Tibial artery (tissue), 4 donors: ENCODE measurements at regions of chr14 and their contacts with region 1.

Region 1: DNA sequence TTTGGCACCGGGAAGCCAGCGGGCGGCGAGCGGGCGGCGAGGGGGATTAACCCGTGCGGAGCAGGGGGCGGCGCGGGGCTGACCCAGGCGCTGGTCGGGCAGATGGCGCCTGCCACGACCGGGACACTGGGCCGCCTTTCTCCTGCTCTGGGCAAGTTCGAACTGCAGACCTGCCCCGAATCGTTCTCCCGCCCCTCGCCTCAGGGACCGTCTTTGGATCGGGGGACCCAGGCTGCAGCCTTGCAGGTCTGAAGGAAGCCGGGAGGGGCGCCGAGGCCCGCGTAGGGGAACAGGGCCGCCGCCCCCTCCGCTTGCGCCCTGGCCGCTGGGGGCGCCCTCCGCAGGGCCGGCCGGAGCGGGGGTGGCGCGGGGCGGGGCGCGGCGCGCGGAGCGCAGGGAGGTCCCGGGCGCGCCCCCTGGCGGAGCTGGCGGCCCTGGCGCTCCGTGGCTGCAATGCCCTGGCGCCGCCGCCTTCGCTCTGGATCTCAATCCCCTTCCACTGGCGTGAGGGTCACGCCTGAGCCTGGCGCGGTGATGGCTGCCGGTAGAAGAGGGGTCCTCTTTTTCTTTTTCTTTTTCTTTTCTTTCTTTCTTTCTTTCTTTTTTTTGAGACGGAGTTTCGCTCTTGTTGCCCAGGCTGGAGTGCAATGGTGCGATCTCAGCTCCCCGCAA is 449 bp upstream of the LTBP2 start:
- DNase-seq: peak; percentile 80 to 89
- H3K4me3 ChIP-seq: peak overlapping the region; percentile 60 to 77
- H3K27ac ChIP-seq: peak overlapping the region; percentile 67 to 73
- H3K4me1 ChIP-seq: peaks cover 0 to 67% (median 44%) of the 10 kb centered on the region in 4 donors
- H3K27me3 ChIP-seq: no peaks in the 10 kb centered on the region
- CTCF ChIP-seq: peak; percentile 60 to 99

Region 2: DNA sequence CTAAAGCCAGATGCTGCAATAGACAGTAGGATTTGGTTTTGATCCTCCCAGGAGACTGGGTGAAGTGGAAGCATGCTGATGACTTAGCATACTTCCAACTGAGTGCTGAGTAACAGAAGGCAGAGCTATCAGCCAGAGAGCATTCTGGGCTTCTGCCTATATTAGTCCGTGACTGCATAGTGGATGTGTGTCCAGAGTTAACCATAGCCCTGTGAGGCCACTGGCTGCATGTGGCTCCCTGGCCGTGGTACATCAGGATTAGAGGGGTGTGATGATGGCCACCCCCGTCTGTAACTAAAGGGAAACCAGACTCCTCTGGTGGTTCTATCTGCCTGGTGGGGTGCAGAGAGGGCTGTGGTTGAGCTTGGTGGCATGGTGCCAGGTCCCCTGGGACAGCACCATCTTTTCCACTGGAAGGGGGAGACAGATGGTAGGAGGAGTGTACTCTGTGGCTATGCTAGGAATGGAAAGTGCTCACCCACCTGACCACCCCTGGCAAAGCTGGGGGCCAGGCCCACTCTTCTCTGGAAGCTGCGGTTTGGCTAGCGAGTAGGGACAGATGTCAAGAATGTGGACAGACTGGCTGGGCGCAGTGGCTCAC is 337.1 kb before region 1 on chr14:
- intact Hi-C with region 1: no loop called
- DNase-seq: no peak
- H3K4me3 ChIP-seq: no peak overlapping the region
- H3K27ac ChIP-seq: no peak overlapping the region
- H3K4me1 ChIP-seq: no peaks in the 10 kb centered on the region
- H3K27me3 ChIP-seq: no peaks in the 10 kb centered on the region
- CTCF ChIP-seq: no peak

Region 3: GRCh38 chr14:74362361-74362915 is 250.0 kb before region 1 on chr14:
- intact Hi-C with region 1: loop called (anchors 5 kb)
- DNase-seq: peak; percentile 88
- H3K4me3 ChIP-seq: no peak overlapping the region
- H3K27ac ChIP-seq: no peak overlapping the region
- H3K4me1 ChIP-seq: no peaks in the 10 kb centered on the region
- H3K27me3 ChIP-seq: peaks cover 0 to 26% of the 10 kb centered on the region in 2 donors
- CTCF ChIP-seq: peak; percentile 95 to 96

Region 4: DNA sequence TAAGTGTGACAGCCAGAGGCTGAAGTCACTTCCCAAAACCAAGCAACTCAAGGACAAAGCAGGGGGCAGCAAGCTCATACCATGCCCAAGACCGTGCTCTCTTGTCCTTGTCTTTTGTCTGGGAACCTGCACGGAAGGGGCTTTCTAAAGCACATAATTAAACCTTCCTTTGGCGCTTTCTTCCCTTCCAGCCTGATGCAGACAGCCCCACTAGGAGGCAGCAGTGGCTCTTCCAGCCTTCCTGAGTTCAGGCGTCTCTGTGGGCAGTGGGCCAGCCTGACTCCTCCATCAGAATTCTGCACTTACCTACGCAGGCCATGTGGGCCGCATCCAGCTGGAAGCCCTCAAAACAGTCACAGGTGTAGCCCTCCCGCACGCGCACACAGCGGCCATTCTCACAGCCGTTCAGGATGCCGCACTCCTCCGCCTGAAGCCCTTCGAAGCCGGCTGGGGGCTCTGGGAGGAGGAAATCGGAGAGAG is 111.3 kb before region 1 on chr14:
- intact Hi-C with region 1: loop called (anchors 5 kb)
- DNase-seq: peak; percentile 72 to 83
- H3K4me3 ChIP-seq: no peak overlapping the region
- H3K27ac ChIP-seq: peak overlapping the region; percentile 2 to 16
- H3K4me1 ChIP-seq: no peaks in the 10 kb centered on the region
- H3K27me3 ChIP-seq: no peaks in the 10 kb centered on the region
- CTCF ChIP-seq: peak; percentile 65 to 68

Region 5: GRCh38 chr14:74712499-74713394 is 100.3 kb after region 1 on chr14 and contains the starts of genes AREL1 and FCF1:
- intact Hi-C with region 1: loop called (anchors 2 kb)
- DNase-seq: peak; percentile 84 to 89
- H3K4me3 ChIP-seq: peak within 1 kb of the TSS; percentile 80 to 88
- H3K27ac ChIP-seq: peak within 1 kb of the TSS; percentile 81 to 88
- H3K4me1 ChIP-seq: peaks cover 0 to 36% (median 24%) of the 10 kb centered on the region in 4 donors
- H3K27me3 ChIP-seq: no peaks in the 10 kb centered on the region
- CTCF ChIP-seq: no peak

Region 6: DNA sequence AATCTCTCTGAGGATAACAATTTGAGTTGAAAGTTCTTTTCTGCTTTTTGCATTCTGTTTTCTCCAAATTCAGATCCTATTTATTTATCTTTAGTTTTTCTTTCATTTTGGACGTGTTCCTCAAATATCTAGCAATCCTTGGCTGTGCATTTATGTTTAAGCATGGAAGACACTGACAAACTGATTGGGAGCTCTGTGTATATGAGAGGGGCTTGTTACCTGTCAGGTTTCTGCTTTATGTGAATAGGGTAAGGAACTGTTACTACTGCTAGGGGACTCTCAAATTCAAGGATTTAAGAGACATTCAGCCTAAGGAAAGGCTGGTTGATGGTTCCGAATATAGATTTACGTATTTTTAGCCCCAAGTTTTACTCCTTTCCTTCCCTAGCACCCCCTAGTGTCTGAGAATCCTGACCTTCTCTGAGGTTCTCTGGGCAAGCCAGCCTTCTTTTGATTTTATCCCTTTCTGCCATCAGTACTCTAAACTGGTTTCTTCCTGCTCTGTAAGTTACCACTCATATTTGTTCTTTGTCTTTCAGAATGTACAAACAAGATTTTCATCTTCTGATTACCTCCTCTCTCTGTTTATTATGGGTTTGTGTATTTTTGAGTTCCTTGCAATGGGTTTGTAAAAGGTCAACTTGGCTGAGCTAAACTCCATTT is 181.2 kb after region 1 on chr14:
- intact Hi-C with region 1: loop called (anchors 5 kb)
- DNase-seq: no peak
- H3K4me3 ChIP-seq: peak overlapping the region in 1 of 2 donors; percentile 4
- H3K27ac ChIP-seq: peak overlapping the region in 1 of 2 donors; percentile 28
- H3K4me1 ChIP-seq: peaks cover 0 to 22% (median 10%) of the 10 kb centered on the region in 4 donors
- H3K27me3 ChIP-seq: no peaks in the 10 kb centered on the region
- CTCF ChIP-seq: peak; percentile 39

Region 7: DNA sequence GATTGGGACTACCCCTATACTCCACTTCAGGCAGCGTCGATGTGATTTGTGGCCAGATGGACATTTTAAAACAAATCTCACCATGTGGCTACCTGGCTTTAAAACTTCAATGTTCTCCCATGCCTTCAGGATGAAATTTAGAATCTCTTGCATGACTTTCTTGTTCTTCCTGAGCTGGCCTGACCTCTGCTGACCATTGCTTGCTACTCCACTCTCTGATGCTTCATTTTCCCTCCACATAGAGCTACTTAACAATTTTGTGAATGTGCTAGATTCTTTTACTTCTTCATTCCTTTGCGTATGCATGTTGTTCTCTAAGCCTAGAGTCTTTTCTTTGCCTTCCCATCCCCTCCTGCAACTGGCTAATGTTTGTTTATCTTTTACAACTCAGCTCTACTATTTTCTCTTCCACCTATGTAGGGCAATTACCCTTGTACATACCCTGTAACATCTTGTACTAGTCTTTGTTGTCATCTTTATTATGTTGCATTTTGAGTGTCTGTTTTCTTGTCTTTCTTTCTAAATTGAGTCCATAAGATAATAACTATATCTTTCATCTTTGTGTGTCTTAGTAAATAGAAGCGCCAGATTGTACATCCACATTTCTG is 191.8 kb after region 1 on chr14:
- intact Hi-C with region 1: loop called (anchors 5 kb)
- DNase-seq: no peak
- H3K4me3 ChIP-seq: no peak overlapping the region
- H3K27ac ChIP-seq: no peak overlapping the region
- H3K4me1 ChIP-seq: no peaks in the 10 kb centered on the region
- H3K27me3 ChIP-seq: no peaks in the 10 kb centered on the region
- CTCF ChIP-seq: peak; percentile 41 to 51